Calu3 (cell line): ENCODE measurements at regions of chr17 and their contacts with region 1.

Region 1: GRCh38 chr17:40915199-40915661 is 22.2 kb downstream of the KRT23 start:
- DNase-seq: no peak
- H3K4me3 Mint-ChIP-seq: peak overlapping the region; percentile 31
- H3K27ac Mint-ChIP-seq: peak overlapping the region; percentile 96
- H3K4me1 Mint-ChIP-seq: peaks cover 84% of the 10 kb centered on the region
- H3K27me3 Mint-ChIP-seq: no peaks in the 10 kb centered on the region
- CTCF ChIP-seq: no peak

Region 2: DNA sequence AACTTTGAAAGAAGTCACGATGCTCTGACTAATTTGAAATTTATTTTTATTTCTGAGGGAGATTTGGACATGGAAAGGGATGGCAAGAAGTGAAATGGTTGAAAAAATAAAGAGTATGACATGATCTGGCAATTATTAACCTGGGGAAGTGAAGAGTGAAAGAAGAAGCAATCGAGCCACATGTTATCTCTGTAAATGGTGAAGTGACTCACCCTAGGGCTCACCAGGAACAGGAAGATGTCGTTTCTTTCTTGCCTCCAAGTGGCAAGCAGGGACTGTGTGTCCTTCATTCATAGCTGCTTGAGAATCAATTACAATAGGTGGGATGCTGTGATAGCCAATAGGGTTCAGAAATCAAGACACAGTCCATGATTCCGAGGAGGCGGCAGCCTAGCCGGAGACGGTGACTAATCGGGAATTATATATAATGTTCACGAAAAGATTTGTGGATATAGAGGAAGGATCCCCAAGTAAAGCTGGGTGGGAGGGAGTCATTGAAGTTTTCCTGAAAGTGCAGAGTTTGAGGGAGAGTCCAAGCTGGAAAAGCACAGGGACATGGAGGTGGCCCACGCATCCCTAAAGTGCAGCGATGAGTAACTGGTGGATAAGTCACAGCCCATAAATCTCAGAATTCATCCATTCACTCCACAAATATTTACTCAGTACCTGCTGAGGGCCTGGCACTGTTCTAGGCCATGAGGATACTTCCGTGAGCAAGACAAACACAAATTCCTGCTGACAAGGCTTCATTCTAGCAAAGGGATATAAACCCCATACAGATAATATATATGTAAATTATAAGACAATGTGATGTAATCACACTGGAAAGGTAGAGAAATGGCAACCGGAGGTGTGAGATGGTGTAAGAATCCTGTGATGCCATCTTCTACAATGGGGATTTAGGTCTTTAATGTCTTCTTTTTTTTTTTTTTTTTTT is 11.8 kb before region 1 on chr17:
- CTCF ChIA-PET with region 1: interaction called, 21 read pairs
- intact Hi-C with region 1: loop called (anchors 1 kb)
- DNase-seq: peak; percentile 82
- H3K4me3 Mint-ChIP-seq: peak overlapping the region; percentile 51
- H3K27ac Mint-ChIP-seq: peak overlapping the region; percentile 92
- H3K4me1 Mint-ChIP-seq: peaks cover 86% of the 10 kb centered on the region
- H3K27me3 Mint-ChIP-seq: no peaks in the 10 kb centered on the region
- CTCF ChIP-seq: no peak

Region 3: GRCh38 chr17:41037853-41038350 is 122.7 kb after region 1 on chr17:
- CTCF ChIA-PET with region 1: interaction called, 17 read pairs
- intact Hi-C with region 1: loop called (anchors 2 kb)
- DNase-seq: no peak
- H3K4me3 Mint-ChIP-seq: no peak overlapping the region
- H3K27ac Mint-ChIP-seq: no peak overlapping the region
- H3K4me1 Mint-ChIP-seq: peaks cover 49% of the 10 kb centered on the region
- H3K27me3 Mint-ChIP-seq: no peaks in the 10 kb centered on the region
- CTCF ChIP-seq: no peak

Region 4: GRCh38 chr17:41758601-41759000 is 843.4 kb after region 1 on chr17:
- CTCF ChIA-PET with region 1: no interaction called
- intact Hi-C with region 1: no loop called
- DNase-seq: no peak
- H3K4me3 Mint-ChIP-seq: no peak overlapping the region
- H3K27ac Mint-ChIP-seq: no peak overlapping the region
- H3K4me1 Mint-ChIP-seq: no peaks in the 10 kb centered on the region
- H3K27me3 Mint-ChIP-seq: no peaks in the 10 kb centered on the region
- CTCF ChIP-seq: no peak